Endothelial cell of umbilical vein (primary cell): ENCODE measurements at regions of chr3 and their contacts with region 1.

Region 1: GRCh38 chr3:196609343-196609775 is 30.1 kb upstream of the NRROS start:
- DNase-seq: peak; percentile 84
- H3K4me3 ChIP-seq: no peak overlapping the region
- H3K27ac ChIP-seq: no peak overlapping the region
- H3K4me1 ChIP-seq: peaks cover 28% of the 10 kb centered on the region
- H3K27me3 ChIP-seq: peaks cover 0 to 3% of the 10 kb centered on the region in 2 experiments
- CTCF ChIP-seq: peak; percentile 68 to 85
- POLR2A ChIP-seq: no peak

Region 2: DNA sequence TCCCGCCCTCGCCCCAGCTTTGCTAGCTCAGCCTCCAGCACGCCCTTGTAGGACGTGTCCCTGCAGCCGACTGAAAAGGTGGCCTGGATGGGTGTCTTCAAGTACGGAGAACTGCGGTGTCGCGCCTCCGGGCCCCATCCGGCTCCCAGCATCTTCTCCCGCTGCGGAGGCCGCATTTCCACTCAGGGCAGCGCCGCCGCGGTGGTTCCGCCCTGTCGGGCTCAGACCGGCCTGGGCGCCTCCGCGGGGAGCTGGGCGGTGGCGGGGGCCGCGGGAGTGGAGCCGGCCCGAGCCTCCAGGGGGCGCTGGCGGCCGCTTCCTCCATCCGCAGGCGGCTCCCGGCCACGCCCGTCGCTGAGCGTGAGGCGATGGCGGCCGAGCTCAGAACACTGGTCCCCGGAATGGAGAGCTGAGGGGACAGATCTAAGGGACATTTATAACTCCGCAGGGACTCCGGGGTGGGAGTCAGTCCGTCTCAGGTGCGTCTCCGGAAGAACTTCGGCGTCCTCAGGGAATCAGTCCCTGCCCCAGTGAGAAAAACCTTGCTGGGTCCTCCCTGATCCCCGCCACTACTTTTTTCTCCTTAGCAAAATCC is 80.6 kb before region 1 on chr3:
- CTCF ChIA-PET with region 1: interaction called, 13 read pairs
- POLR2A ChIA-PET with region 1: no interaction called
- dilution Hi-C with region 1: no loop called
- intact Hi-C with region 1: loop called (anchors 2 kb)
- DNase-seq: peak; percentile 54
- H3K4me3 ChIP-seq: peak overlapping the region; percentile 29 to 59 (median 38)
- H3K27ac ChIP-seq: peak overlapping the region; percentile 40
- H3K4me1 ChIP-seq: peaks cover 8% of the 10 kb centered on the region
- H3K27me3 ChIP-seq: no peaks in the 10 kb centered on the region
- CTCF ChIP-seq: peak; percentile 72 to 95
- POLR2A ChIP-seq: peak; percentile 61

Region 3: GRCh38 chr3:196546537-196546936 is 62.8 kb before region 1 on chr3:
- CTCF ChIA-PET with region 1: no interaction called
- POLR2A ChIA-PET with region 1: no interaction called
- dilution Hi-C with region 1: no loop called
- intact Hi-C with region 1: no loop called
- DNase-seq: no peak
- H3K4me3 ChIP-seq: no peak overlapping the region
- H3K27ac ChIP-seq: no peak overlapping the region
- H3K4me1 ChIP-seq: no peaks in the 10 kb centered on the region
- H3K27me3 ChIP-seq: peaks cover 2 to 3% of the 10 kb centered on the region in 2 experiments
- CTCF ChIP-seq: no peak
- POLR2A ChIP-seq: no peak

Region 4: DNA sequence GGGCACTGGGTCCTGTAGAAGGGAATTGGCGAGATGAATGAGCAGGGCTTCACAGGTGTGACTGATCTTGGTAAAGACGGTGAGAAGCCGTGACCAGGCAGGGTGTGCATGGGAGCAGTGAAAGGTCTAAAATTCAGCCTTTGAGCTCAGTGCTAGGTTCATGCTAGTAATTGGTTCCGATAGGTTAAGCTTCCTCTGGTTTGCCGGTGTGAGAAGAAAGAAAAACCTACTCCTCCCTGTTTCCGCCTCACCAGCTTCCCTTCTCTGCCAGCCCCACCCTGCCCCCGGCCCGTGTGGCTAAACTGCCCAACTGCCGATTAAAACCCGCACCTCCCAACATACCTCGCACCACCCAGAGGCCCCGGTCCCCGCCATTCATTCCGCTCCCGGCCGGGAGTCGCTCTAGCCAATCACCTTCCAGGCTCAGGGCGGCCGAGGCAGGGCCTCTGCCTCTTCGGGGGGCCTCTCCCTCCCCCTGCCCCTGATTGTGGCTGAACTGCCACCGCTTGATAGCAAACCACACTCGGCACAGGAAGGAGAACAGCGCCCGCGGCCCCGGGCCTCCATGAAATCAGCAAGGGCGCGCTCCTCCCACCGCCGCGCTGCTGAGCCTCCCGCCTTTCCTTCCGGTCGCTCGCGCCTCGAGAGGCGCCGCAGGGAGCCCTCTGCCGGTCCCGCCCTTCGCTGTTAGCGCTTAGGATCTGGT is 22.8 kb after region 1 on chr3:
- CTCF ChIA-PET with region 1: interaction called, 52 read pairs
- POLR2A ChIA-PET with region 1: no interaction called
- dilution Hi-C with region 1: no loop called
- intact Hi-C with region 1: loop called (anchors 1 kb)
- DNase-seq: peak; percentile 80
- H3K4me3 ChIP-seq: peak overlapping the region; percentile 50 to 55 (median 55)
- H3K27ac ChIP-seq: peak overlapping the region; percentile 19
- H3K4me1 ChIP-seq: peaks cover 6% of the 10 kb centered on the region
- H3K27me3 ChIP-seq: peaks cover 0 to 3% of the 10 kb centered on the region in 2 experiments
- CTCF ChIP-seq: peak in 1 of 2 donors; percentile 43
- POLR2A ChIP-seq: peak; percentile 89

Region 5: GRCh38 chr3:196650740-196651311 is 41.5 kb after region 1 on chr3:
- CTCF ChIA-PET with region 1: interaction called, 30 read pairs
- POLR2A ChIA-PET with region 1: interaction called, 6 read pairs
- dilution Hi-C with region 1: no loop called
- intact Hi-C with region 1: loop called (anchors 1 kb)
- DNase-seq: peak; percentile 98
- H3K4me3 ChIP-seq: no peak overlapping the region
- H3K27ac ChIP-seq: no peak overlapping the region
- H3K4me1 ChIP-seq: peaks cover 24% of the 10 kb centered on the region
- H3K27me3 ChIP-seq: no peaks in the 10 kb centered on the region
- CTCF ChIP-seq: no peak
- POLR2A ChIP-seq: no peak

Region 6: GRCh38 chr3:196670339-196670738 is 61.0 kb after region 1 on chr3:
- CTCF ChIA-PET with region 1: interaction called, 22 read pairs
- POLR2A ChIA-PET with region 1: no interaction called
- dilution Hi-C with region 1: no loop called
- intact Hi-C with region 1: no loop called
- DNase-seq: peak; percentile 13
- H3K4me3 ChIP-seq: no peak overlapping the region
- H3K27ac ChIP-seq: no peak overlapping the region
- H3K4me1 ChIP-seq: peaks cover 7% of the 10 kb centered on the region
- H3K27me3 ChIP-seq: peaks cover 0 to 2% of the 10 kb centered on the region in 2 experiments
- CTCF ChIP-seq: no peak
- POLR2A ChIP-seq: no peak

Region 7: GRCh38 chr3:196684548-196685407 is 75.4 kb after region 1 on chr3:
- CTCF ChIA-PET with region 1: interaction called, 334 read pairs
- POLR2A ChIA-PET with region 1: no interaction called
- dilution Hi-C with region 1: loop called (anchors 5 kb)
- intact Hi-C with region 1: loop called (anchors 1 kb)
- DNase-seq: peak; percentile 61
- H3K4me3 ChIP-seq: no peak overlapping the region
- H3K27ac ChIP-seq: no peak overlapping the region
- H3K4me1 ChIP-seq: peaks cover 7% of the 10 kb centered on the region
- H3K27me3 ChIP-seq: peaks cover 0 to 3% of the 10 kb centered on the region in 2 experiments
- CTCF ChIP-seq: peak; percentile 73
- POLR2A ChIP-seq: no peak

Region 8: GRCh38 chr3:196942226-196942914 is 333.0 kb after region 1 on chr3 and contains the start of gene NCBP2:
- CTCF ChIA-PET with region 1: interaction called, 13 read pairs
- POLR2A ChIA-PET with region 1: no interaction called
- dilution Hi-C with region 1: no loop called
- intact Hi-C with region 1: loop called (anchors 2 kb)
- DNase-seq: peak; percentile 98
- H3K4me3 ChIP-seq: peak within 1 kb of the TSS; percentile 73 to 93 (median 85)
- H3K27ac ChIP-seq: peak within 1 kb of the TSS; percentile 76
- H3K4me1 ChIP-seq: peaks cover 16% of the 10 kb centered on the region
- H3K27me3 ChIP-seq: no peaks in the 10 kb centered on the region
- CTCF ChIP-seq: peak; percentile 64 to 81
- POLR2A ChIP-seq: peak; percentile 90
- total RNA-seq, gene NCBP2: 73.4 and 76.1 TPM in 2 replicates

Region 9: GRCh38 chr3:197062446-197062845 is 453.1 kb after region 1 on chr3:
- CTCF ChIA-PET with region 1: no interaction called
- POLR2A ChIA-PET with region 1: no interaction called
- dilution Hi-C with region 1: no loop called
- intact Hi-C with region 1: no loop called
- DNase-seq: no peak
- H3K4me3 ChIP-seq: no peak overlapping the region
- H3K27ac ChIP-seq: no peak overlapping the region
- H3K4me1 ChIP-seq: no peaks in the 10 kb centered on the region
- H3K27me3 ChIP-seq: no peaks in the 10 kb centered on the region
- CTCF ChIP-seq: no peak
- POLR2A ChIP-seq: no peak